Activated B cell treated with CpG ODN at 0.5 μM for 24 hours (primary cell): ENCODE measurements at regions of chr11 and their contacts with region 1.

Region 1: DNA sequence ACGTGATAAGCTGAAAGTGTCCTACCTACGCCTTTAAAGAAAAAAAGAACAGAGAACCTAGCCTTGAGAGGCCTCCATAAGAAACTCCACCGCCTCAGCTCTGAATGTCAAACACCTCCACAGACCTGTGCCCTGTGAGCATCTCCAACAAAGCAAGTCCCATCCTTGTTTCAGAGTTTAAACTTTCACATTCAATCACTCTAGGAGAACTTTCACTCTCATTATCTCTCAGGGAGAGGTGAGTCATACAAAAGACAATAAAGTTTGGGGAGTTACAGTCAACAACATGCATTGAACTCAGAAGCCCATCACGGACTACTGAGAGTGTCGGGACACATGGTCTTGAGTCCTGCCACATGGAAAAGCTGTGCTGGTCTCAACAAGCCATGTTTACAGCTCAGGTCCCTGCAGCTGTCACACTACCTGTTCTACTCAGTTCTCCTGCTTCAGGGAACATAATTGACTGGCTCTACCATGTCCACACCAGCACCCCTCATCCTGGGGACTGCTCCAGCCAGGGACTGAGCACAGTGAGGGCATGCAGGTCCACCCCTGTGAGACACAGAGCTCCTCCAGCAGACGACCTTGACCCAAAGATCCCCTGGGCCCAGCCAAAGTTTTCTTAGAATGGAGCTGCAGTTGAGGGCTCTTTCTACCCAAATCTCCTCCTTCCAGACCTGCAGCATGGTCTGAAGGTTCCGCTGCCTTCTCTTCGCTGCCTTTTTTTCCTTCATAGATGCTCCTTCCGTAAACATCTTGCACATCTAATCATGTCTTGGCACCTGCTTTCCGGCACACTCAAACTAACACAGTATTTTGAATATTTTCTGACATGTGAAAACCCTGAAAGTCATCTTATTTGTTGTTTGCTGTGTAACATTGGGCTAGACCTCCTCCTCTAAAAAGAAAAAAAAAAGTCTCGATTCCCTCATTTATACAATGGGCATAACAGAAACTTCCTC is 114.9 kb downstream of the ETS1 start:
- DNase-seq: no peak
- ATAC-seq: peak; percentile 26
- H3K4me3 Mint-ChIP-seq: peak overlapping the region; percentile 60
- H3K27ac Mint-ChIP-seq: peak overlapping the region; percentile 89
- H3K4me1 Mint-ChIP-seq: peaks cover 100% of the 10 kb centered on the region
- H3K27me3 Mint-ChIP-seq: no peaks in the 10 kb centered on the region
- CTCF ChIP-seq: no peak

Region 2: GRCh38 chr11:128195057-128195751 is 277.2 kb before region 1 on chr11:
- CTCF ChIA-PET with region 1: no interaction called
- POLR2A ChIA-PET with region 1: no interaction called
- intact Hi-C with region 1: loop called (anchors 5 kb)
- DNase-seq: no peak
- ATAC-seq: peak; percentile 84
- H3K4me3 Mint-ChIP-seq: peak overlapping the region; percentile 16
- H3K27ac Mint-ChIP-seq: peak overlapping the region; percentile 22
- H3K4me1 Mint-ChIP-seq: peaks cover 18% of the 10 kb centered on the region
- H3K27me3 Mint-ChIP-seq: no peaks in the 10 kb centered on the region
- CTCF ChIP-seq: no peak

Region 3: GRCh38 chr11:128346804-128347203 is 125.6 kb before region 1 on chr11:
- CTCF ChIA-PET with region 1: no interaction called
- POLR2A ChIA-PET with region 1: no interaction called
- intact Hi-C with region 1: no loop called
- DNase-seq: no peak
- ATAC-seq: no peak
- H3K4me3 Mint-ChIP-seq: no peak overlapping the region
- H3K27ac Mint-ChIP-seq: no peak overlapping the region
- H3K4me1 Mint-ChIP-seq: peaks cover 34% of the 10 kb centered on the region
- H3K27me3 Mint-ChIP-seq: no peaks in the 10 kb centered on the region
- CTCF ChIP-seq: no peak

Region 4: DNA sequence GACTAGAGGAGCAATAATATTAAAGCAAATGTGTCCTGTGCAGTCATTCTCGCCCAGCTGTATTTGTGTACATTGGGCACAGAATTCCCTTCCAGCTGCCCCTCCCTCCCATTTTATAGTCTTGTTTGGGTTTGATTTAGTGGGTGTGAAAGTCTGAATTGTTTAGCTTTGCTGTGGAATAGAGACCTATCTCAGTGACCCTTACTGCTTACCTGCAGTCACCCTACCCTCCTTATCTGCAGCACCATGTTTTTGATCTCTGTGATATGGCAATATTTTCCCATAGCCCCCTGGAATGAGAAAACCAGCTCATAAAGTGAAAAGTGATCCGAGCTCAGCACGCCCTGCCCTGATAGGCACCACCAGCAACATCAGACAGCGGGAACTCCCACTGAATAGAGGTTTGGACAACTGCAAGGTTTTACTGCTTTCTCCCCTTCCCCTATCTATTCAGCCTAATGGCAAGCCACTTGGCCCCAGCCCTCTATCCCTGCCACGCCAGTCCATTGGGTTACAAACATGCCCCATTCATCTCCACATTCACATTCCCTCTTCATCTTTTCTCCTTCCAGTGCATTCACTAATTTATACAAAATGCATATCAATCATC is 84.1 kb before region 1 on chr11:
- CTCF ChIA-PET with region 1: no interaction called
- POLR2A ChIA-PET with region 1: no interaction called
- intact Hi-C with region 1: no loop called
- DNase-seq: no peak
- ATAC-seq: no peak
- H3K4me3 Mint-ChIP-seq: no peak overlapping the region
- H3K27ac Mint-ChIP-seq: no peak overlapping the region
- H3K4me1 Mint-ChIP-seq: peaks cover 11% of the 10 kb centered on the region
- H3K27me3 Mint-ChIP-seq: no peaks in the 10 kb centered on the region
- CTCF ChIP-seq: no peak

Region 5: DNA sequence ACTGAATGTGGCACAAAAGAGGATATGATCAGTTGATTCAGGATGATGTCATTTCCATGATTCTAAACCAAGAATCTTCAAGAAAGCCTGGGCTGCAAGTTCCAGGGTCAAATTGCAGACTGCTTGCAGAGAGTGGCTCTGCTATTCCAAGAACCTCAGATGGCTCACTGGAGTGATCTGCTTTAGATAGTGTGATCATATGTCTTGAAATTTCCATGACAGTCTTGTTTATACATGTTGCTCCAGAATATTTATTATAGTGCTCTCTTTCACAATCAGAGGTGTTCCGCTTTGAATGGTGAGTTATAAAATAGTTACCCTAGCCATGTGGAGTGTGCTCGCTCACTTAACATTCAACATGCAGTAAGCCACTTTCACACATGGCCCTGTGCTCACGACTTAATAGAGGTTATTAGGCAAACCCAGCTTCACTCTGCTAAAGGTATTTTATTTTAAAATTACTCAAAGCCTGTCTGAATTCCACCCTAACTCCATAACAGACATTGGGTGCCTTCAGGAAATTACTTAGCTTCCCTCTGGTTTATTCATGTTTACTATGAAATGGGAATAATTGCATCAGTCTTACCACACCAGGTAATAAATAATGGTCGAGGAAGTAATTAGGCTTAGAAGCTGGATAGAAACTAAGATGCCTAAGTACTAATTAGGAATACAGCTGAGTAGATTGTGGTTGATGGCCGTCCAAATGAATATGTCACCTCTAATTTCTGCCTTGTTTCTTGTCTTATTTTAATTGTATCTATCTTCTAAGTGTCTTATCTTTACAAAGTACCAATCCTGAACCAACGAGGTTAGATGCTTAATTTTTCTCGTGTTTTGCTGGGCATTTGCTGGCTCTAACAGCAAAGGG is 72.9 kb before region 1 on chr11:
- CTCF ChIA-PET with region 1: no interaction called
- POLR2A ChIA-PET with region 1: no interaction called
- intact Hi-C with region 1: loop called (anchors 2 kb)
- DNase-seq: no peak
- ATAC-seq: peak; percentile 81
- H3K4me3 Mint-ChIP-seq: peak overlapping the region; percentile 40
- H3K27ac Mint-ChIP-seq: peak overlapping the region; percentile 91
- H3K4me1 Mint-ChIP-seq: peaks cover 29% of the 10 kb centered on the region
- H3K27me3 Mint-ChIP-seq: no peaks in the 10 kb centered on the region
- CTCF ChIP-seq: no peak

Region 6: DNA sequence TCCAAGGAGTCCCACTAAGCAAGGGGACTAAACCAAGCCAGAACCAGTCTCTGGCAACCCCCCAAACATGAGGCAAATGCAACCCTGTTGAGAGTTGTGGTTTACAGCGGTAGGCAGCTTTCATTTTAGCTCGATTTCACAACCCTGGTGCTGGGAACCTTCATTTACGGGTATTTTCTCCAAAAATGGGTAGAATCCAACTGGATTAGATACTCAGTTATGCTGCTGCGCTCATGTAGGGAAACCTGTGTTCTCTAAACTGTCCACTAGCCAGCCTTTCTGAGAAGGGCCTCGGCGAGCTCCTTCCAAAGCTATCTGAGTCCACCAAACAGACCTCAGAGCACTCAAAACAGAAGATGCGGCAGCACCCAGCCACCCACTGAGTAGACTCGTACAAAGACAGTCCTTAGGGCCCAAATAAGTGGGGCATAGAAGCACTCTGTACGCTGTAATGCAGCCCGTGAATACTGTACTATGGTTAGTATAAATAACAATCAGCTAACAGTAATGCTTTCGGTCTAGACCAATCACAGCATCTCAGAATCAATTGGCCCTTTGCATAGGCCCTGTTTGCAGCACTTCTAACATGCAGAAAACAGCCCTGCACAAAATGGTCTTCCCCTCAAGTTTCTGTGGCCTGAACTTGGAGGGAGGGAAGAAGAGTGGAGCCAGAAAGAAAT is 10.2 kb after region 1 on chr11:
- CTCF ChIA-PET with region 1: interaction called, 6 read pairs
- POLR2A ChIA-PET with region 1: interaction called, 107 read pairs
- intact Hi-C with region 1: loop called (anchors 1 kb)
- DNase-seq: no peak
- ATAC-seq: peak; percentile 18
- H3K4me3 Mint-ChIP-seq: peak overlapping the region; percentile 67
- H3K27ac Mint-ChIP-seq: peak overlapping the region; percentile 89
- H3K4me1 Mint-ChIP-seq: peaks cover 95% of the 10 kb centered on the region
- H3K27me3 Mint-ChIP-seq: no peaks in the 10 kb centered on the region
- CTCF ChIP-seq: no peak

Region 7: GRCh38 chr11:128506999-128507611 is 34.7 kb after region 1 on chr11:
- CTCF ChIA-PET with region 1: interaction called, 3 read pairs
- POLR2A ChIA-PET with region 1: interaction called, 221 read pairs
- intact Hi-C with region 1: no loop called
- DNase-seq: no peak
- ATAC-seq: peak; percentile 64
- H3K4me3 Mint-ChIP-seq: peak overlapping the region; percentile 74
- H3K27ac Mint-ChIP-seq: peak overlapping the region; percentile 77
- H3K4me1 Mint-ChIP-seq: peaks cover 100% of the 10 kb centered on the region
- H3K27me3 Mint-ChIP-seq: no peaks in the 10 kb centered on the region
- CTCF ChIP-seq: no peak

Region 8: GRCh38 chr11:128624269-128625175 is 152.1 kb after region 1 on chr11:
- CTCF ChIA-PET with region 1: interaction called, 8 read pairs
- POLR2A ChIA-PET with region 1: interaction called, 95 read pairs
- intact Hi-C with region 1: loop called (anchors 1 kb)
- DNase-seq: peak; percentile 64
- ATAC-seq: peak; percentile 82
- H3K4me3 Mint-ChIP-seq: peak overlapping the region; percentile 74
- H3K27ac Mint-ChIP-seq: peak overlapping the region; percentile 99
- H3K4me1 Mint-ChIP-seq: peaks cover 99% of the 10 kb centered on the region
- H3K27me3 Mint-ChIP-seq: no peaks in the 10 kb centered on the region
- CTCF ChIP-seq: no peak